GM12878 (cell line): ENCODE measurements at regions of chr1 and their contacts with region 1.

Region 1: DNA sequence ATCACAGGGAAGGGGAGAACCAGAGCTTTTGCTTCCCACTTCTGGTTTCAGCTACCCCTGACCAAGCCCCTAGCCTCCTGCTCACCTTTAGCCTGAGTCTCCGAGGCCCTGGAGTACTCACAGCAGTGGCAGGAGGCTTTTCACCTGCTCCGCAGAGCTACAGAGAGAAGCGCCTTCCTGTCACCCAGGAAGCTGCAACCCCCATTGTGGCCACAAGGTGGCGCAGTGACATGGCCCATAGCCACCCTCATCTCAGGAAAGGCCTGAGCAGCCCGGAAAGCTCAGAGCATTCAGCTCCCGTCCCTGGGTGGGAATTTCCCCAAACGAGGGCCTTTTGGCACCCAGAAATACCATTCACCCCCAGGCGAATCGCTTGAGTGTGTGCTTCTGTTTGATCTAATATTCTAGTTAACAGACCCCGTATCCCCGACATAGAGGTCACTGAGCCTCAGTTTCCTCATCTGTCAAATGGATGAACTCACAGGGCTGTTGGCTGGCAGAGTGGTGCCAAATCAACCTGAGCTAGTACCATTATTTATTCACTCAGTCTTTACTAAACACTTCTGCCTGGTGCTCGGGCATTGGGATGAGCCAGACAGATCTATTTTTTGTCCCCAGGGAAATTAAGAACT is 25.3 kb downstream of the A3GALT2 start:
- DNase-seq: peak; percentile 64
- ATAC-seq: peak; percentile 97
- H3K4me3 ChIP-seq: no peak overlapping the region
- H3K27ac ChIP-seq: no peak overlapping the region
- H3K4me1 ChIP-seq: no peaks in the 10 kb centered on the region
- H3K27me3 ChIP-seq: no peaks in the 10 kb centered on the region
- CTCF ChIP-seq: peak; percentile 97 to 99 (median 98); a peak in 5 of 6 replicates
- EP300 ChIP-seq: no peak
- POLR2A ChIP-seq: no peak
- RAD21 ChIP-seq: peak; percentile 77

Region 2: DNA sequence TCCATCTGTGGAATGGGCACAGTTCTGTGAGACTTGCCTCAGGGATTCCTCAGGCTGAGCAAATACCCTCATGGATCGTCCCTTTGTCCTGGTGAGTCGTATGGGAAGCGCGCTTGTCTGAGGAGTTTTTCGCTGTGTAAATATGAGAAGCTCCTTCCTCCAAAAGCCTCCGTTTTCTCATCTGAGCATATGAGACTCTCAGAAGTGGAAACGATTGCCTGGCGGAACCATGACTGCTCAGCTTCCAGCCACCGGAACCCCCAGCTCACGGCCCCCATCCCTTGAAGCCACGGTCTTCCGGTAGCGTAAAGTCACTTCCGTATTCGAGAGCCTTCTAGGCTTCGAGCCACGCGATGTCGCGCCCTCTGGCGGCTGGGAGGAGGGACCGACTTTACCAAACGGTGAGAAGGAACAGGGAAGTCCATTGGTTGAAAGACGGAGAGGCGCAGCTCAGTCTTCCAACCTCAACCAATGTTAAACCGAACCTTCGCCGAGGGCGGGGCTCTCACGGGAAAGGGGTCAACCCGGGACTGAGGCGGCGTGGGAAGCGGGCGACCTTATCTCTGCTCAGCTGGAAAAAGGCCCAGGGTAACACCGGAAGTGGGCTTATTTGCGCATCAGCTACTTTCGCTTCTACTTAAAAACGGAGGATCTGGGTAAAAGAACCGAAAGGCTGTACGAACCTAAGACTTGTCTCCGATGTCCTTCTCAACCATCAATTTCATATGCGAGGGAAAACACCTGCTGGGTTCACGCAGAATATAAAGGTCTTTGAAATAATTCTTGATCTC is 168.4 kb before region 1 on chr1:
- CTCF ChIA-PET with region 1: interaction called, 11 read pairs
- POLR2A ChIA-PET with region 1: no interaction called
- RAD21 ChIA-PET with region 1: interaction called, 3 read pairs
- SMC1A ChIA-PET with region 1: no interaction called
- in situ Hi-C with region 1: no loop called
- intact Hi-C with region 1: no loop called
- DNase-seq: peak; percentile 99
- ATAC-seq: peak; percentile 95
- H3K4me3 ChIP-seq: peak overlapping the region; percentile 97
- H3K27ac ChIP-seq: peak overlapping the region; percentile 97
- H3K4me1 ChIP-seq: peaks cover 18% of the 10 kb centered on the region
- H3K27me3 ChIP-seq: no peaks in the 10 kb centered on the region
- CTCF ChIP-seq: peak; percentile 92 to 99 (median 99); a peak in 5 of 6 replicates
- EP300 ChIP-seq: no peak
- POLR2A ChIP-seq: peak; percentile 95
- RAD21 ChIP-seq: peak; percentile 31

Region 3: DNA sequence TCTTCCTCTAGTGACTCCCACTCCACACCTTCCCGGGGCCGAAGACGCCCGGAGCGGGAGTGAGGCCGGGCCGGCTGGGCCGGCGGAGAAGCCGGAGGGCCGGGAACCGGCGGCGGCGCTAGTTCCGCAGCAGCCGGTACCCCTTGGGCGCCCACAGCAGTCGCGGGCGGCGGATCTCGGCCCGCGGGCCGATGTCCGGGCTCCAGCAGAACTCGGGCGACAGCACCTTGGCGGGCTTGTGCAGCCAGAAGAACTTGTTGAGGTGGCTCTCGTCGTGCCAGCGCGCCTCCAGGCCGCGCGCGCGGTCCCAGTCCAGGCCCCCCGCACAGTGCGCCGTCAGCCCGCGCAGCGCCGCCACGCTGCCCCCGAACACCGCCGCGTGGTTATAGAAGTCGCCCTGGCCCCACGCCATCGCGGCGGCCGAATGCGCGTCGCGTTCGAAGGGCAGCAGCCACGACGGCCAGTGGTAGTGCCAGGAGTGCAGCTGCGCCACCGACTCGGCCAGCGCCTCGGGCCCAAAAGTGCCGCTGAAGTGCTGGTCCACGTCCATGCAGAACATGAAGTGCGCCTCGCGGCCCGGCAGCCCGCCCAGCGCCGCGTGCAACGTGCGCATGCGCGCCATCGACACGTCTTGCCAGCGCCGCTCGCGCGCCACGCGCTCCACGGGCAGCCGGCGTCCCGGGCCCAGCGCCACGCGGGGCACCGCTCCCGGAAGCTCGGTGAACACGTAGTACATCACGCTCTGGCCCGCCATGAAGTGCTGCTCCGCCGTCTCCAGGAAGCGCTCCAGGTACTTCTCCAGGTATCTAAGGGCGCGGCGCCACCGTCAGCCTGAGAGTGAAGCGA is 11.3 kb after region 1 on chr1:
- CTCF ChIA-PET with region 1: interaction called, 28 read pairs
- POLR2A ChIA-PET with region 1: no interaction called
- RAD21 ChIA-PET with region 1: interaction called, 5 read pairs
- SMC1A ChIA-PET with region 1: interaction called, 6 read pairs
- in situ Hi-C with region 1: no loop called
- intact Hi-C with region 1: no loop called
- DNase-seq: no peak
- ATAC-seq: no peak
- H3K4me3 ChIP-seq: no peak overlapping the region
- H3K27ac ChIP-seq: no peak overlapping the region
- H3K4me1 ChIP-seq: no peaks in the 10 kb centered on the region
- H3K27me3 ChIP-seq: no peaks in the 10 kb centered on the region; a peak in 1 of 4 replicates
- CTCF ChIP-seq: no peak
- EP300 ChIP-seq: no peak
- POLR2A ChIP-seq: no peak
- RAD21 ChIP-seq: no peak

Region 4: DNA sequence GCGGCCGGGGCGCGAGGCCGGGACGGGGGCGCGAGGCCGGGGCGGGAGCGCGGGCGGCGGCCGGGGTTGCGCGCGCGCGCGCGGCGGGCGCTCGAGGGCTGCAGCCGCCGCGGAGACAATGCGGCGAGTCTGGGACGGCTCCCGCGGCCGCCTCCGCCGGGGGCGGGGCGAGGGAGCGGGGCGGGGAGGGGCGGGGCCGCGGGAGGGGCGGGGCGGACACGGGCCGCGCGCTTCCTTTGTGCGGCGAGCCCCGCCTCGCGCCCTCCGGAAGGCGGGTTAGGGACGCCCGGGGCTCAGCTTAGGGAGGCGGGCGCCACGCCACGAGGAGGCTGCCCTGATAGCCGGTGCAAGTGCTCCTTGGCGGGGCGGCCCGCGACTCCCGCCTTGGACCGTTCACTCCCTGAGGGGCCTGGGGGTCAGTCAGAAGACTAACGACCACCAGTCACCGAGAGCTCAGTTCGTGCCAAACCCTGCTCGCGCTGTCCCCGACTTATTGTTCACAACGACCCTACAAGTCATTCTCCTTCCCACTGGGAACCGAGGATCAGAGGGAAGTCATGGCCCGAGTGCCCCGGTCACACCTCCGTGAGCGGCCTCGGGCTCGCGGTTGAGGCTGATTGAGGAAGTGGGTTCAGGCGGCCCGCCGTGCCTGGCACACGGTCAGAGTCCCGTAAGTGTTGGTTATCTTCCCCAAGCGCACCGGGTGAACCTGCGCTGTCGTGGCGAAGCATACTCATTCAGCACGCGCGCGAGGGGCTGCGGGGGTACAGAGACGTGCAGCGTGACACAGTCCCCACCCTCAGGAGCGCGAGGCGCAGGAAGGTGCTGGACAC is 54.4 kb after region 1 on chr1:
- CTCF ChIA-PET with region 1: interaction called, 14 read pairs
- POLR2A ChIA-PET with region 1: interaction called, 6 read pairs
- RAD21 ChIA-PET with region 1: no interaction called
- SMC1A ChIA-PET with region 1: interaction called, 16 read pairs
- in situ Hi-C with region 1: no loop called
- intact Hi-C with region 1: no loop called
- DNase-seq: no peak
- ATAC-seq: peak; percentile 87
- H3K4me3 ChIP-seq: peak overlapping the region; percentile 75
- H3K27ac ChIP-seq: peak overlapping the region; percentile 92
- H3K4me1 ChIP-seq: peaks cover 18% of the 10 kb centered on the region
- H3K27me3 ChIP-seq: no peaks in the 10 kb centered on the region
- CTCF ChIP-seq: no peak
- EP300 ChIP-seq: no peak
- POLR2A ChIP-seq: peak; percentile 93
- RAD21 ChIP-seq: no peak

Region 5: DNA sequence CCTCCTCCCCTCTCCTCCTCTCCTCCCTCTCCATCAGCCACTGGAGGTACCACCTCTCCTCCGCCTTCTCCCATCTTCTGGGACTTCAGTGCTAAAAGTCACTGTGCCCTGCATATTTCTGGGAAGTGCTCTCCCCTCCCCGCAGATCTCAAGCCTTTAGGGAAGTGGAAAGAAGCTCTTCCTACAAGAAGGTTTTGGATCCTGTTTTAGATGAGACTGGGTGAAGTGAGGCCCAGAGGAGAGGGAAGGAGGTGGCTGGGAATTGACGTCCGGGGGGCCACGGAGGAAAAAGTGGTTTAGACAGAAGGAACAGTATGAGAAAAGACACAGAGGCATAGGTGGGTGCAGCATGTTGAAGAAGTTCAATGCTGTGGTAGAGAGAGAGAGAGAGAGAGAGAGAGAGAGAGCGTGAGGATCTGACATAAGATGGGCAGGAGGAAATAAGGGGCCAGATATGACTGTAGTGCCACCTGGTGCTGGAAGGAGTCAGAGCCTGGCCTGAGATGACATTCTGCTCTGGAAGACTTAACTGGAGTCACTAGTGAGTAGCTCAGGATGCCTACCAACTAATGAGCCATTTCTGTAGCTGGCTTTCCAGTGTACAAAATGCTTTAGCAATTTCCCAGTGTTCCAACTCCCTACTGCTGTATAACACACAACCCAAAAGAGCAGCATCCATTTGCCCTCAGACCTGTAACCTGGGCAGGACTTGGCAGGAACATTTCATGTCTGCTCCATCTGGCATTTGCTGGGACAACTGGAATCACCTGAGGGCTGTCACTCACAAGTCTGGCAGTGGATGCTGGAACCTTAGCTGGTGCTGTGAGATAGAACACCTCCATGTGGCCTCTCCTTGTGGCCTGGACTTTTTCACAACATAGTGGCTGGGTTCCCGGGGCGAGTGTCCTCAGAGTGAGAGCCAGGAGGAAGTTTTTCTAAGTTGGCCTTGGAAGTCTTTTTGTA is 160.3 kb after region 1 on chr1:
- CTCF ChIA-PET with region 1: interaction called, 73 read pairs
- POLR2A ChIA-PET with region 1: interaction called, 3 read pairs
- RAD21 ChIA-PET with region 1: interaction called, 11 read pairs
- SMC1A ChIA-PET with region 1: interaction called, 8 read pairs
- in situ Hi-C with region 1: no loop called
- intact Hi-C with region 1: no loop called
- DNase-seq: no peak
- ATAC-seq: peak; percentile 94
- H3K4me3 ChIP-seq: no peak overlapping the region
- H3K27ac ChIP-seq: no peak overlapping the region
- H3K4me1 ChIP-seq: peaks cover 27% of the 10 kb centered on the region
- H3K27me3 ChIP-seq: no peaks in the 10 kb centered on the region
- CTCF ChIP-seq: peak; percentile 74 to 80 (median 74)
- EP300 ChIP-seq: no peak
- POLR2A ChIP-seq: no peak
- RAD21 ChIP-seq: peak; percentile 81

Region 6: DNA sequence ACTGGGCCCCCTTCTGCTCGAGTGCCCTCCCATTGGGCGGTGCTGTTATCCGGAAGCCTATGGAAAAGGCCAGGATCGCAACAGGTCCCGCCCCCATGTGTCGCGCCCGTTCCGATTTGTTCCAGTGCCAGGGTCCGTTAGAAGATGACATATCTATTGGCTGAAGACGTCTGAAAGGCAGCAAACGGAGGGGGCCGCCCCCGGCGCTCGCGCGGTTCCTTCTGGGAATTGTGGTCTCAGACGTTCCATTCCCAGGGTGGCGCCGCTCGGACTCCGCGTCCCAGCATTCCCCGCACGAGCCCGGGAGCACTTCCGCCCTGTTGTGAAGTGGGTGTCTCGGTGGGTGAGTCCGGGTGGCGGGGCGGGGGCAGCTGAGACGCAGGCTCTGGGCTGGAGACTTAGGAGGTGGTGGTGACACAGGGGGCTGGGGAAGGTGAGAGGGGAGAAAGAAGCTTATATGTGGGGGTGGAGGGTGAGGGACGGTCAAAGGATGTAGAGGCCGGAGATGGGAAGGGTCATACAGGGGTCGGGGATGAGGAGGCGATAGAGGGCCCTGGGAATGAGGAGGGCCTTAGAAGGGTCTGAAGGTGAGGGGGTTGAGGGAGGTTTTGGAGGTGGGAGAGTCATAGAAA is 176.9 kb after region 1 on chr1 and contains the start of gene ZSCAN20:
- CTCF ChIA-PET with region 1: interaction called, 239 read pairs
- POLR2A ChIA-PET with region 1: interaction called, 8 read pairs
- RAD21 ChIA-PET with region 1: interaction called, 103 read pairs
- SMC1A ChIA-PET with region 1: interaction called, 149 read pairs
- in situ Hi-C with region 1: loop called (anchors 5 kb)
- intact Hi-C with region 1: loop called (anchors 1 kb)
- DNase-seq: peak; percentile 89
- ATAC-seq: peak; percentile 96
- H3K4me3 ChIP-seq: peak within 1 kb of the TSS; percentile 74
- H3K27ac ChIP-seq: peak within 1 kb of the TSS; percentile 55
- H3K4me1 ChIP-seq: peaks cover 7% of the 10 kb centered on the region
- H3K27me3 ChIP-seq: no peaks in the 10 kb centered on the region
- CTCF ChIP-seq: no peak
- EP300 ChIP-seq: no peak
- POLR2A ChIP-seq: peak; percentile 72
- RAD21 ChIP-seq: no peak
- polyA plus RNA-seq, gene ZSCAN20: 0.35 to 0.37 TPM